Naive thymus-derived CD4-positive, alpha-beta T cell (primary cell): ENCODE measurements at regions of chr6 and their contacts with region 1.

Region 1: DNA sequence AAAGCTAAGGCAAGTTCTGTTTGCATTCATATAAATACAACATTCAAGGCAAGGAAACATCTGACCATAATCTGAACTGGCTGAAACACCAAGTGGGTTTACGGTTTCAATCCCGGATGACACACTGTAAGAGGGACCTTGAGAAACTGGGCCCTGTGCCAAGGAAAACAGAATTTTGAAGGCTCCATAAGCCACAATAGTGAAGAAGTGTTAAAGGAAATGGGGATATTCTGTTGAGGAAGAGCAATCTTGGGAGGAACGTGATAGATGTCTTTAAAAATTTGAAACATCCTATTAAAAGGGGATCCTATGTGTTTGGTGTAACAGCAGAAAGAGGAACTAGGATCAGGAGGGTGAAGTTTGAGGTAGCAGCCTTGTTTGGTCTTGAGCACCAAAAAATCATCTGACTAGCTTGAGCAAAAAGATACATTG is 82.4 kb upstream of the TAB2 start:
- DNase-seq: no peak
- ATAC-seq: no peak
- H3K4me3 ChIP-seq: no peak overlapping the region
- H3K4me3 Mint-ChIP-seq: peak overlapping the region in 8 of 10 donors; percentile 38 to 85 (median 76)
- H3K27ac ChIP-seq: peak overlapping the region; percentile 9
- H3K27ac Mint-ChIP-seq: peak overlapping the region; percentile 5 to 99 (median 95)
- H3K4me1 ChIP-seq: peaks cover 30 to 40% of the 10 kb centered on the region in 2 donors
- H3K4me1 Mint-ChIP-seq: peaks cover 35 to 67% (median 51%) of the 10 kb centered on the region in 7 donors
- H3K27me3 ChIP-seq: no peaks in the 10 kb centered on the region
- H3K27me3 Mint-ChIP-seq: no peaks in the 10 kb centered on the region

Region 2: DNA sequence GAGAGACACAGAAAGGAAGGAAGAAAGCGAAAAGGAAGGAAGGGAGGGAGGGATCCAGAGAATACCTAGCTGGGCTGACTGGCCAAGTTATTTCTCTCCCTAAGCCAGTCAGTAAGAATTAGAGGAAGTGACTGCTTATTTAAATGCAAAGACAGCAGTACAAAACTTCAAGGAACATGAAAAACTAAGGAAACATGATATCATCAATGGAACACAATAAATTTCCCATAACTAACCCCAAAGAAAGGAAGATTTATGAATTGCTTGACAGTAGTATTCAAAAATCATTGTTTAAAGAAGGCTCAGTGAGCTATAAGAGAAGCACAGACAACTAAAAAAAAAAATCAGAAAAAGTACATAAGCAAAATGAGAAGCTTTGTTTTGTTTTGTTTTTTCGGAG is 1144.8 kb before region 1 on chr6:
- CTCF ChIA-PET with region 1: no interaction called
- POLR2A ChIA-PET with region 1: no interaction called
- intact Hi-C with region 1: no loop called
- DNase-seq: no peak
- ATAC-seq: no peak
- H3K4me3 ChIP-seq: no peak overlapping the region
- H3K4me3 Mint-ChIP-seq: no peak overlapping the region
- H3K27ac ChIP-seq: no peak overlapping the region
- H3K27ac Mint-ChIP-seq: no peak overlapping the region
- H3K4me1 ChIP-seq: no peaks in the 10 kb centered on the region
- H3K4me1 Mint-ChIP-seq: no peaks in the 10 kb centered on the region
- H3K27me3 ChIP-seq: peaks cover 0 to 3% of the 10 kb centered on the region in 2 donors
- H3K27me3 Mint-ChIP-seq: peaks cover 0 to 4% (median 0%) of the 10 kb centered on the region in 5 donors

Region 3: DNA sequence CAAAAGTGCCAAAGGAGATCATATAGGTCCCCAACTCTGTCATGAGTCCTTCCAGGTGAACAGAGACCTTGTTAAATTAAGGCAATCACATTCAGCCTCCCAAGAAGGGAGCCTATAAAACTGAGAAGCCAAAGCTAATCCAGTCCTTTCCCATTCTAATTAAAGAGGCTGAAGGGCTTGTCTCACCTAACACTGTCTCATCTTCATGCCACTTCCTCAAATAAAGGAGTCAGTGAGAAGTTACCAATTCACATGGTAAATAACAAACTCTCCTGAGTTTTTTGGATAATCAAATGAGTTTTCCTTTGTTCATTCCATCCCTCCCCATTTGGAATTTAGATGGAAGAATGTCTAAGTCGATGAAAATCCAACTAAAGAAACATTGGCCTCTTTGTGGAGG is 245.6 kb before region 1 on chr6:
- CTCF ChIA-PET with region 1: no interaction called
- POLR2A ChIA-PET with region 1: no interaction called
- intact Hi-C with region 1: no loop called
- DNase-seq: no peak
- ATAC-seq: no peak
- H3K4me3 ChIP-seq: no peak overlapping the region
- H3K4me3 Mint-ChIP-seq: no peak overlapping the region
- H3K27ac ChIP-seq: no peak overlapping the region
- H3K27ac Mint-ChIP-seq: no peak overlapping the region
- H3K4me1 ChIP-seq: no peaks in the 10 kb centered on the region
- H3K4me1 Mint-ChIP-seq: peaks cover 0 to 2% (median 0%) of the 10 kb centered on the region in 7 donors
- H3K27me3 ChIP-seq: no peaks in the 10 kb centered on the region
- H3K27me3 Mint-ChIP-seq: peaks cover 2 to 43% (median 17%) of the 10 kb centered on the region in 5 donors

Region 4: GRCh38 chr6:149140137-149140909 is 94.8 kb before region 1 on chr6:
- CTCF ChIA-PET with region 1: no interaction called
- POLR2A ChIA-PET with region 1: interaction called, 3 read pairs
- intact Hi-C with region 1: loop called (anchors 1 to 2 kb)
- DNase-seq: peak; percentile 7 to 67 (median 27)
- ATAC-seq: peak; percentile 82
- H3K4me3 ChIP-seq: peak overlapping the region; percentile 14
- H3K4me3 Mint-ChIP-seq: peak overlapping the region; percentile 17 to 89 (median 78)
- H3K27ac ChIP-seq: peak overlapping the region; percentile 88
- H3K27ac Mint-ChIP-seq: peak overlapping the region in 8 of 9 donors; percentile 95 to 100 (median 98)
- H3K4me1 ChIP-seq: peaks cover 12 to 27% of the 10 kb centered on the region in 2 donors
- H3K4me1 Mint-ChIP-seq: peaks cover 20 to 61% (median 44%) of the 10 kb centered on the region in 7 donors
- H3K27me3 ChIP-seq: no peaks in the 10 kb centered on the region
- H3K27me3 Mint-ChIP-seq: no peaks in the 10 kb centered on the region

Region 5: GRCh38 chr6:149190224-149190831 is 44.8 kb before region 1 on chr6:
- CTCF ChIA-PET with region 1: no interaction called
- POLR2A ChIA-PET with region 1: no interaction called
- intact Hi-C with region 1: loop called in 1 of 2 experiments (anchors 2 kb)
- DNase-seq: peak in 7 of 9 donors; percentile 8 to 38 (median 20)
- ATAC-seq: peak; percentile 40
- H3K4me3 ChIP-seq: no peak overlapping the region
- H3K4me3 Mint-ChIP-seq: no peak overlapping the region
- H3K27ac ChIP-seq: no peak overlapping the region
- H3K27ac Mint-ChIP-seq: peak overlapping the region in 5 of 9 donors; percentile 15 to 83 (median 38)
- H3K4me1 ChIP-seq: peaks cover 0 to 10% of the 10 kb centered on the region in 2 donors
- H3K4me1 Mint-ChIP-seq: peaks cover 11 to 45% (median 18%) of the 10 kb centered on the region in 7 donors
- H3K27me3 ChIP-seq: no peaks in the 10 kb centered on the region
- H3K27me3 Mint-ChIP-seq: no peaks in the 10 kb centered on the region

Region 6: GRCh38 chr6:149218471-149218870 is 16.7 kb before region 1 on chr6:
- CTCF ChIA-PET with region 1: interaction called, 4 read pairs
- POLR2A ChIA-PET with region 1: interaction called, 4 read pairs
- intact Hi-C with region 1: loop called in 1 of 2 experiments (anchors 1 kb)
- DNase-seq: no peak
- ATAC-seq: no peak
- H3K4me3 ChIP-seq: no peak overlapping the region
- H3K4me3 Mint-ChIP-seq: peak overlapping the region in 1 of 10 donors; percentile 52
- H3K27ac ChIP-seq: no peak overlapping the region
- H3K27ac Mint-ChIP-seq: peak overlapping the region in 8 of 9 donors; percentile 14 to 75 (median 51)
- H3K4me1 ChIP-seq: peaks cover 5 to 6% of the 10 kb centered on the region in 2 donors
- H3K4me1 Mint-ChIP-seq: peaks cover 3 to 38% (median 24%) of the 10 kb centered on the region in 7 donors
- H3K27me3 ChIP-seq: no peaks in the 10 kb centered on the region
- H3K27me3 Mint-ChIP-seq: no peaks in the 10 kb centered on the region

Region 7: GRCh38 chr6:149368065-149368464 is 132.9 kb after region 1 on chr6:
- CTCF ChIA-PET with region 1: no interaction called
- POLR2A ChIA-PET with region 1: no interaction called
- intact Hi-C with region 1: loop called in 1 of 2 experiments (anchors 1 kb)
- DNase-seq: no peak
- ATAC-seq: no peak
- H3K4me3 ChIP-seq: no peak overlapping the region
- H3K4me3 Mint-ChIP-seq: no peak overlapping the region
- H3K27ac ChIP-seq: peak overlapping the region; percentile 21
- H3K27ac Mint-ChIP-seq: no peak overlapping the region
- H3K4me1 ChIP-seq: peaks cover 40 to 57% of the 10 kb centered on the region in 2 donors
- H3K4me1 Mint-ChIP-seq: peaks cover 28 to 44% (median 30%) of the 10 kb centered on the region in 7 donors
- H3K27me3 ChIP-seq: no peaks in the 10 kb centered on the region
- H3K27me3 Mint-ChIP-seq: no peaks in the 10 kb centered on the region

Region 8: GRCh38 chr6:150865406-150866146 is 1630.4 kb after region 1 on chr6 and contains the start of gene MTHFD1L:
- CTCF ChIA-PET with region 1: no interaction called
- POLR2A ChIA-PET with region 1: no interaction called
- intact Hi-C with region 1: no loop called
- DNase-seq: peak; percentile 46 to 84 (median 55)
- ATAC-seq: peak; percentile 83
- H3K4me3 ChIP-seq: peak within 1 kb of the TSS; percentile 72
- H3K4me3 Mint-ChIP-seq: peak within 1 kb of the TSS; percentile 83 to 97 (median 88)
- H3K27ac ChIP-seq: peak within 1 kb of the TSS; percentile 61
- H3K27ac Mint-ChIP-seq: peak within 1 kb of the TSS in 8 of 9 donors; percentile 28 to 89 (median 70)
- H3K4me1 ChIP-seq: peaks cover 5 to 6% of the 10 kb centered on the region in 2 donors
- H3K4me1 Mint-ChIP-seq: peaks cover 10 to 44% (median 14%) of the 10 kb centered on the region in 7 donors
- H3K27me3 ChIP-seq: no peaks in the 10 kb centered on the region
- H3K27me3 Mint-ChIP-seq: peaks cover 8 to 18% (median 16%) of the 10 kb centered on the region in 5 donors
- total RNA-seq, gene MTHFD1L: 6.4 to 57.8 (median 9.3) TPM